Activated T-helper 1 cell treated with anti-CD3 and anti-CD28 coated beads, Interleukin-12 subunit alpha, Interleukin-12 subunit beta, Interleukin-2, Interleukin-4 antibody, amounts not matched to agents 30 ng/mL and 10 ng/mL and 1 ng/mL, durations not matched to agents 14 hours and 24 hours and 36 hours (primary cell): ENCODE measurements at regions of chr17 and their contacts with region 1.

Region 1: DNA sequence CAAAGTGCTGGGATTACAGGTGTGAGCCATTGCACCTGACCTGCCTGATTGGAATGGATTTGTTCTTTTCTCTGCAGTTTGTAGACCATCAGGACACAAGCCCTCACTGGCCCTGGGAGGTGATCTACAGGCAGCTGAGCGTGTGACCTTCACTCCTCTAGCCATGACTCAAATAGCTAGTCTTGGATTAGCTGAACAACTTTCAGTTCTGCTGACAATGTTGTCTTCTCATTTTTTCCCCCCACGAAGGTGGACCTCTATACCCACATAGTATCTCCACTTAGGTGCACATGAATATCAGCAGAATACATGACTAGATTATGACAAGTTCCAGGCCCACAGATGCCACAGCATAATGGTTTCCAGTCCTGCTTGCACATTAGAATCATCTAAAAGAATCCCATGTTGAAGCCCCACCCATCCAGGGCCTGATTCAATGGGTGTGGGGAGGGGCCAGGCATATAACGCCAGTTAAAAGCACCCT is 36.8 kb downstream of the HS3ST3B1 start:
- DNase-seq: no peak
- H3K4me3 Mint-ChIP-seq: peak overlapping the region; percentile 69
- H3K27ac Mint-ChIP-seq: peak overlapping the region; percentile 89
- H3K4me1 Mint-ChIP-seq: peaks cover 61% of the 10 kb centered on the region
- H3K27me3 Mint-ChIP-seq: no peaks in the 10 kb centered on the region

Region 2: GRCh38 chr17:14203388-14203787 is 134.2 kb before region 1 on chr17:
- intact Hi-C with region 1: loop called (anchors 1 kb)
- DNase-seq: peak; percentile 32
- H3K4me3 Mint-ChIP-seq: peak overlapping the region; percentile 24
- H3K27ac Mint-ChIP-seq: peak overlapping the region; percentile 85
- H3K4me1 Mint-ChIP-seq: peaks cover 90% of the 10 kb centered on the region
- H3K27me3 Mint-ChIP-seq: no peaks in the 10 kb centered on the region

Region 3: GRCh38 chr17:14308965-14309879 is 28.4 kb before region 1 on chr17:
- intact Hi-C with region 1: loop called (anchors 1 kb)
- DNase-seq: peak; percentile 87
- H3K4me3 Mint-ChIP-seq: peak overlapping the region; percentile 80
- H3K27ac Mint-ChIP-seq: peak overlapping the region; percentile 70
- H3K4me1 Mint-ChIP-seq: peaks cover 66% of the 10 kb centered on the region
- H3K27me3 Mint-ChIP-seq: peaks cover 1% of the 10 kb centered on the region

Region 4: DNA sequence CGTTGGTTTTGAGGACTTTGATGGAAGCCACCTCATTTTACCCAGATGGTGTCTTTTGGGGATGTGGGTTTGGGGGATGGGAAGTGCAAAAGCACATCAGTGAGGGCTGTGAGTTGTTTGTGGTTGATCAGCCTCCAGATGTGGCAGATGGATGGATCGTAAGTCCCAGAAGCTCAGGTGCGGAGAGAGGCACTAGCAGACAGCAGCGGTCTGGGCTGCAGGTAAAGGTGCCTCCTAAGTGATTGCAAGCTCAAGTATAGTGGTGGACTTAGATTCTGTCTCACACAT is 18.8 kb before region 1 on chr17:
- intact Hi-C with region 1: loop called (anchors 1 kb)
- DNase-seq: no peak
- H3K4me3 Mint-ChIP-seq: peak overlapping the region; percentile 37
- H3K27ac Mint-ChIP-seq: peak overlapping the region; percentile 52
- H3K4me1 Mint-ChIP-seq: peaks cover 63% of the 10 kb centered on the region
- H3K27me3 Mint-ChIP-seq: no peaks in the 10 kb centered on the region

Region 5: GRCh38 chr17:14351493-14351892 is 13.9 kb after region 1 on chr17:
- intact Hi-C with region 1: loop called (anchors 1 kb)
- DNase-seq: no peak
- H3K4me3 Mint-ChIP-seq: no peak overlapping the region
- H3K27ac Mint-ChIP-seq: no peak overlapping the region
- H3K4me1 Mint-ChIP-seq: peaks cover 21% of the 10 kb centered on the region
- H3K27me3 Mint-ChIP-seq: no peaks in the 10 kb centered on the region

Region 6: DNA sequence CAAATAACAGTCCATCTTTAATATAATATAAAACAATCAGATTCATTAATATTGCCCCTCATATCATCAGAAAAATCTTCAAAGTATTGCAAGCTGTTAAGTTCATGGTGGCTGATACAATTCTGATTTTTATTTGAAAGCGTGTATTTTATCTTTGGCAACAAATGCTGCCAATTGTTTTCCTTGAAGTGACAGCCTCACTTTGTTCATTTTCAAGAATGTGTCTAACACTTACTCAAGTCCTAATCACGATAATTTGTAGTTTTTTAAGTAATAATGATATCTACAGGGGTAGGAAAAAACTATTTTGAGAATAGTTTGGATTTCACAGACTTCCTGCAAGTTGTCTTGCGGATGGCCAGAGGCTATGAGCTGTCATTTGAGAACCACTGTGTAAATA is 39.0 kb after region 1 on chr17:
- intact Hi-C with region 1: no loop called
- DNase-seq: no peak
- H3K4me3 Mint-ChIP-seq: no peak overlapping the region
- H3K27ac Mint-ChIP-seq: no peak overlapping the region
- H3K4me1 Mint-ChIP-seq: no peaks in the 10 kb centered on the region
- H3K27me3 Mint-ChIP-seq: no peaks in the 10 kb centered on the region